Esophagus squamous epithelium (tissue), 5 donors: ENCODE measurements at regions of chr4 and their contacts with region 1.

Region 1: DNA sequence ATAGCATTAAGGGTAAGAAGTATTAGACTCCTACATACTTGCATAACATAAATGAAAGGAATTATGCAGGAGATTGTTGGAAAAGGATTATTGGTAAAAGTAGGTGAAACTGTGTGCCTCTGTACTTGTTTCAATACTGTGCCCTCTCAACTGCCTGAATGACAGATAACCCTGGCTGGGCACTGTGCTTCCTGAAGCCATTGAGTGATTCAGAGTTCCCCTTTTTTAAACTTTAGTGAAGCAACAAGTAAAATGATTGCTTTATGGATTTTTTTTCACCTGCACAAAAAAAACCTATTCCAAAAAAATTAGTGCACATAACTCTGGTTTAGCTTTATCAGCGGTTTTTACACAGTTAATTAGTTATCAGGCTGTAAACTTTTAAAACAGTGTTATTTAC is 204.8 kb downstream of the TRAM1L1 start:
- DNase-seq: no peak
- H3K4me3 ChIP-seq: no peak overlapping the region
- H3K27ac ChIP-seq: no peak overlapping the region
- H3K4me1 ChIP-seq: no peaks in the 10 kb centered on the region
- H3K27me3 ChIP-seq: no peaks in the 10 kb centered on the region
- CTCF ChIP-seq: no peak
- POLR2A ChIP-seq: no peak

Region 2: DNA sequence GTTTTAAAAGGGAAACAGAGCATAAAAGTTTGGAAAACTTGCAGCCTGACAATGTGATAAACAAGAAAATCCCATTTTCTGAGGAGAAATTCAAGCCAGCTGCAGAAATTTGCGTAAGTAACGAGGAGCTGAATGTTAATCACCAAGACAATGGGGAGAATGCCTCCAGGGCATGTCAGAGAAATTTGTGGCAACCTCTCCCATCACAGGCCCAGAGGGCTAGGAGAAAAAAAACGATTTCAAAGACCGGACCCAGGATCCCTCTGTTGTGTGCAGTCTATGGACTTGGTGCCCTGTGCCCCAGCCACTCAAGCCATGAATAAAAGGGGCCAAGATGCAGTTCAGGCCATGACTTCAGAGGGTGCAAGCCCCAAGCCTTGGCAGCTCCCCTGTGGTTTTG is 798.2 kb after region 1 on chr4:
- intact Hi-C with region 1: loop called (anchors 10 kb)
- DNase-seq: no peak
- H3K4me3 ChIP-seq: no peak overlapping the region
- H3K27ac ChIP-seq: no peak overlapping the region
- H3K4me1 ChIP-seq: no peaks in the 10 kb centered on the region
- H3K27me3 ChIP-seq: no peaks in the 10 kb centered on the region
- CTCF ChIP-seq: no peak
- POLR2A ChIP-seq: no peak